MCF 10A (cell line): ENCODE measurements at regions of chr4 and their contacts with region 1.

Region 1: DNA sequence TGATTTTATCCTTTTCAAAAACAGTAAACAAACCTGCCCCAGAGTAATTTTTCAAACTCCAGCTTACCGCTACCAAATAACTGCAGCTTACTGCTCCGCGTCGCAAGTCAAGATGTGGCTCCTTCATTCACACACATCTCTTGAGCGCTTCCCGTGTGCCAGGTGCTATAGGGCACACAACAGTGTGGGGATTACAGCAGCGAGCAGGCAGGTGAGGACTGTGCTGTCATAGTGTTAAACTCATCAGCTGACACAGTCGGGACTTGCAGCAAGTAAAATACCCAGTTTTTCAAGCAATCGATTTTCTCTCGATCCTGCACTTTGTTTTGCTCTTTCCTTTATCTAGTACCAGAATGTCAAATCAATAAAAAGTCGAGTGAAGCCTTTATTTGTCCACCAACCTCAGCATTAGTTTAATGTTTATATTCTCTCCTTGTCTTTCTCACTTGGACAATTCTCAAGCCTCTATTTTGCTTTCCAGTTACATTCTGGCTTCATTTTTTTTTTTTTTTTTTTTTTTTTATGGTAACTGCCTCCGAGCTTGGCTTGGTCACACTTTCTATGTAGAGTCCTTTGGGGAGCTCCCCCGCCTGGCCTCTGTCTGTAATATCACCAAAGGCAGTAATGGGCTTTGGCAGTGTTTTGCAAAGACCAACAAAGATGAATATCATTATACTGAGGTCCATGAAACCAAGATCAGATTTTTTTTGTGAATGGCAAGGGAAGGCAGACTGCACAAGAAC is 8.3 kb upstream of the ASB5 start:
- DNase-seq: peak; percentile 69
- H3K4me3 Mint-ChIP-seq: no peak overlapping the region
- H3K27ac Mint-ChIP-seq: peak overlapping the region; percentile 63
- H3K4me1 Mint-ChIP-seq: peaks cover 17% of the 10 kb centered on the region
- H3K27me3 Mint-ChIP-seq: no peaks in the 10 kb centered on the region
- CTCF ChIP-seq: peak; percentile 59

Region 2: DNA sequence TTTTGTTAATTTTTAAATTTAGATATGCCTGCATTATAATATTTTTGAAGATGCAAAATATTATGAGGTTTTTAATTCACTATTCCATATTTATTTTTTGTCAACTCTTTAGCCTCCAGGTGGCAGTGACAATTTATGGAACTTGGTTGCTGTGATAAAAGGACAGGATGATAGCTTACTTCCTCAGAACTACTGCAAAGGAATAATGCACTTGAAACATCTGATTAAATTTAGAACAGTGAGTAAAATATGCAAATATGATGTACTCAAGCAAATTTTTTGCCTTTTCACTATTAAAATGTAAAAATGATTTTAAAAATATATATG is 127.0 kb before region 1 on chr4:
- CTCF ChIA-PET with region 1: interaction called, 68 read pairs
- POLR2A ChIA-PET with region 1: interaction called, 9 read pairs
- intact Hi-C with region 1: loop called (anchors 1 kb)
- DNase-seq: peak; percentile 48
- H3K4me3 Mint-ChIP-seq: no peak overlapping the region
- H3K27ac Mint-ChIP-seq: no peak overlapping the region
- H3K4me1 Mint-ChIP-seq: no peaks in the 10 kb centered on the region
- H3K27me3 Mint-ChIP-seq: no peaks in the 10 kb centered on the region
- CTCF ChIP-seq: peak; percentile 37

Region 3: GRCh38 chr4:176185067-176185466 is 92.3 kb before region 1 on chr4:
- CTCF ChIA-PET with region 1: interaction called, 4 read pairs
- POLR2A ChIA-PET with region 1: interaction called, 3 read pairs
- intact Hi-C with region 1: loop called (anchors 1 kb)
- DNase-seq: peak; percentile 70
- H3K4me3 Mint-ChIP-seq: no peak overlapping the region
- H3K27ac Mint-ChIP-seq: peak overlapping the region; percentile 37
- H3K4me1 Mint-ChIP-seq: peaks cover 10% of the 10 kb centered on the region
- H3K27me3 Mint-ChIP-seq: no peaks in the 10 kb centered on the region
- CTCF ChIP-seq: no peak